ENCODE measurements at regions of chr14 and their contacts with region 1.

Region 1: GRCh38 chr14:51979088-51979709 is 10.1 kb upstream of the RTRAF start:
- DNase-seq: peak; percentile 90
- ATAC-seq: peak; percentile 67
- H3K4me3 Mint-ChIP-seq: no peak overlapping the region
- H3K27ac Mint-ChIP-seq: no peak overlapping the region
- H3K4me1 Mint-ChIP-seq: peaks cover 9% of the 10 kb centered on the region
- H3K27me3 Mint-ChIP-seq: peaks cover 1% of the 10 kb centered on the region

Region 2: DNA sequence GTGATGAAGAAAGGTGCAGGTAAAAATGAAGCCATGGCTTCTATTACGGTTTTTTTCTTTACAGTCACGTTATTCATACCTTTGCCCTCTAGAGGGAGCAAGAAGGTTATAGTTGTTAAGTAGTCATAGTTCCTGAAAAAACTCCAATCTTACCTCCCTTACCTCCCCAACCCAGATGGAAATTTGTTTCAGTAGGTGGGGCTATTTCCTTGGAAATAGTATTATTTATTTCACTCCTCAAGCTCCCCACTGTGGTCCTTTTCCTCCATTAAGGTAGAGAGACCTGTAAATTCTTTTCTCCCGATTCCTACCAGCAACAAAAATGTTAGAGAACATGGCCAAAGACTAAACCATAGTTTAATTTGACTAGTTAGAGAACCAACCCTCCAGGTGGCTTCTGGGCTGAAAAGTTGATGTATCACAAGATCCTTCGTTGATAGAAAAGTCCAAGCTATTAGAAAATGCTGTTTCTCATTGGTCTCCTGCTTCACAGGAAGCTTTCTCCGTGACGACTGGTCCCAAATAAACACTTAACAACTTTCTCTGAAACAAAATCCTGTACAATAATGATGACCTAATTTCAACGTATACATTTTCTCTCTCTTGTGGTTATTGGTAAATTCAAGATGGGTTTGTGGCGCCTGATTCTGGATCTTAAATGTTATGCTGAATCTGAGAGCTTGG is 695.7 kb before region 1 on chr14:
- CTCF ChIA-PET with region 1: no interaction called
- POLR2A ChIA-PET with region 1: no interaction called
- intact Hi-C with region 1: loop called in 1 of 2 experiments (anchors 5 kb)
- DNase-seq: no peak
- ATAC-seq: no peak
- H3K4me3 Mint-ChIP-seq: no peak overlapping the region
- H3K27ac Mint-ChIP-seq: no peak overlapping the region
- H3K4me1 Mint-ChIP-seq: no peaks in the 10 kb centered on the region
- H3K27me3 Mint-ChIP-seq: no peaks in the 10 kb centered on the region

Region 3: GRCh38 chr14:51860164-51860824 is 118.9 kb before region 1 on chr14 and contains the start of gene GNG2:
- CTCF ChIA-PET with region 1: interaction called, 16 read pairs
- POLR2A ChIA-PET with region 1: interaction called, 3 read pairs
- intact Hi-C with region 1: loop called (anchors 5 kb)
- DNase-seq: peak; percentile 90
- ATAC-seq: peak; percentile 93
- H3K4me3 Mint-ChIP-seq: peak within 1 kb of the TSS; percentile 90
- H3K27ac Mint-ChIP-seq: peak within 1 kb of the TSS; percentile 82
- H3K4me1 Mint-ChIP-seq: peaks cover 50% of the 10 kb centered on the region
- H3K27me3 Mint-ChIP-seq: no peaks in the 10 kb centered on the region
- total RNA-seq, gene GNG2: 133 to 136 TPM

Region 4: GRCh38 chr14:51963286-51963685 is 15.9 kb before region 1 on chr14:
- CTCF ChIA-PET with region 1: interaction called, 92 read pairs
- POLR2A ChIA-PET with region 1: no interaction called
- intact Hi-C with region 1: no loop called
- DNase-seq: no peak
- ATAC-seq: peak; percentile 65
- H3K4me3 Mint-ChIP-seq: peak overlapping the region; percentile 56
- H3K27ac Mint-ChIP-seq: peak overlapping the region; percentile 81
- H3K4me1 Mint-ChIP-seq: peaks cover 48% of the 10 kb centered on the region
- H3K27me3 Mint-ChIP-seq: no peaks in the 10 kb centered on the region

Region 5: GRCh38 chr14:51996148-51996746 is 17.0 kb after region 1 on chr14:
- CTCF ChIA-PET with region 1: interaction called, 22 read pairs
- POLR2A ChIA-PET with region 1: no interaction called
- intact Hi-C with region 1: no loop called
- DNase-seq: no peak
- ATAC-seq: no peak
- H3K4me3 Mint-ChIP-seq: no peak overlapping the region
- H3K27ac Mint-ChIP-seq: no peak overlapping the region
- H3K4me1 Mint-ChIP-seq: peaks cover 35% of the 10 kb centered on the region
- H3K27me3 Mint-ChIP-seq: no peaks in the 10 kb centered on the region

Region 6: DNA sequence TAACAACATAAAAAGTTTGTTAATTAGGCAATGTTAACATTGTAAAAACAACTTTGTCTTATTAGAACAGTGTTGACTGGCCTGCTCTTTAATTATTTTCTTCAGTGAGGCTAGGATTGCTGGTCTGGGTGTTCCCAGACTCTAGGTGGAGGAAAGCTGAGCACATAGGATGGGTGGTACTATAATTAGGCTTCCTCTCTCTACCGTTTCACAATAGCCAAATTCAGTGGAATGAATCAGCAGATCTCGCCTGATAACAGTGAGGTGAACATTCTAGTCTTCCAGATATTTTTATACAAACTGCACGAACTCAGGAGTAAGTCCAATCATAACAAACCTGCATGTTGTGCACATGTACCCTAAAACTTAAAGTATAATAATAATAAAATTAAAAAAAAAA is 300.2 kb after region 1 on chr14:
- CTCF ChIA-PET with region 1: no interaction called
- POLR2A ChIA-PET with region 1: no interaction called
- intact Hi-C with region 1: no loop called
- DNase-seq: no peak
- ATAC-seq: no peak
- H3K4me3 Mint-ChIP-seq: no peak overlapping the region
- H3K27ac Mint-ChIP-seq: no peak overlapping the region
- H3K4me1 Mint-ChIP-seq: peaks cover 3% of the 10 kb centered on the region
- H3K27me3 Mint-ChIP-seq: peaks cover 2% of the 10 kb centered on the region

Region 7: DNA sequence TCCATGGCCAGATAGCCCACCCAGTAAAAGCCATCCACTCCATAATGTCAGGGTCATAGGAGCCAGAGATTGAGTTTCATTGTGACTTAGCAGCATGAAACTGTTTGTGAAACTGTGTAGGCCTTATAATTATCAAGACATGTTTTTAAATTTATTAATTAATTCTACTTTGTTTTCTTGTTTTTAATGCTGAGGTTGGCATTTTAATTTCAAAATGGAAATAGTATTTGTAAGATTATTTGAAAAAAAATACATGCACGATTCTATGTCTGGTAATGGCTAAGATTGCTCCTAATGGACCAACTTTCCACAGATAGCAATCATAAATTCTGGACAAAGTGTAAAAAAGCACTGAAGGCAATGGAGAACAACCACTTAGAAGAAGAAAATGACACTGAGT is 640.5 kb after region 1 on chr14:
- CTCF ChIA-PET with region 1: no interaction called
- POLR2A ChIA-PET with region 1: no interaction called
- intact Hi-C with region 1: no loop called
- DNase-seq: no peak
- ATAC-seq: no peak
- H3K4me3 Mint-ChIP-seq: no peak overlapping the region
- H3K27ac Mint-ChIP-seq: no peak overlapping the region
- H3K4me1 Mint-ChIP-seq: no peaks in the 10 kb centered on the region
- H3K27me3 Mint-ChIP-seq: peaks cover 1% of the 10 kb centered on the region